CD4-positive, alpha-beta T cell (primary cell): ENCODE measurements at regions of chr19 and their contacts with region 1.

Region 1: DNA sequence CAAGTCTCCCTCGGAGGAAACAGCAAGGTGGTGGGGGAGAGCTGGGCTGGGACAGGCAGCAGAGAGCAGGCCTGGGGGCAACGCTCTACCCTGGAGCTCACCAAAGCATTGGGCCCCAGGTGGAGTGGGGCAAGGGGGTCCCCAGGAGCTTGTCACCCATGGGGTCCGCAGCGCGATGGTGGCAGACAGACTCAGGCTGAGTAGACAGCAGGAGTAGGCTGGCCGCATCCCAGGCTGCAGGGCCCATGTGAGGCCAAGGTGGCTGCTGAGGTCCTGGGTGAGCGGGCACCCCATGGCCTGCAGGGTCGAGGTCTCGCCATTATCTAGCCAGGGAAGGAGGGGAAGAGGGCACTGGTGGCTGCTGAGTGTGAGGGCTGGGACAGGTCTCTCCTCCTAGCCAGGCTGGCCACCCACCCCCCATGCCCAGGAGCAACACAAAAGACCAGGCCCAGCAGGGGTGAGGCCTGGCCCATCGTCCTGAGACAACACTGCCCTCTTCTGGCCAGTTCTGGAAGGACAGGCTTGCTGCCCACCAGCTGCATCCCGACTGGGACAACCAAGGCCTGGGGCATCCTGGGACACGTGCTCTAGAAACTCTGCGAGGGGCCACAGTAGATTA is 33.1 kb downstream of the CEBPG start:
- DNase-seq: peak; percentile 50 to 83 (median 72)
- ATAC-seq: peak; percentile 88
- H3K4me3 ChIP-seq: no peak overlapping the region
- H3K4me3 Mint-ChIP-seq: no peak overlapping the region
- H3K27ac ChIP-seq: no peak overlapping the region
- H3K27ac Mint-ChIP-seq: no peak overlapping the region
- H3K4me1 ChIP-seq: no peaks in the 10 kb centered on the region
- H3K4me1 Mint-ChIP-seq: no peaks in the 10 kb centered on the region
- H3K27me3 ChIP-seq: no peaks in the 10 kb centered on the region
- H3K27me3 Mint-ChIP-seq: no peaks in the 10 kb centered on the region
- CTCF ChIP-seq: peak; percentile 88

Region 2: DNA sequence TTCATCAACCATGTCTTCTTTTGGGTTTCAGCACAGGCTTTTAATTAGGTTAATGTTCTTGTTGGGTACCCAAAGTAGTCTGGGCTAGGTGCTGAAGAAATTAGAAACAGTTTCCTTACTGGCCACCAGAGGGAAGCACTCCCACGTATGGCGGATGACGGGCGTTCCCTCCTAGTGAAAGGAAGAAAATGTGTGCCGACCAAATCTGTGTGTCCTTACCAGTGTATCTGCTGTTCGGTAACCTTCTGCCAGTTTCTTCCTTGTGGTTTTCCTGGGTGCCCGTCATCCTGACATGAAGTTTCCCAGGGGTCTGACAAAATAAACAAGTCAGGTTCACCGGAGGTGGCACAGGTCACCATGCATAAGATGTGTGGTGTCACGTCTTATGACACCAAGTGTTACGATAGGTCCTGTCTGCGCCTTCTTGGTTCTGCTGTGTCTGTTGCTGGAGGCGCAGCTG is 280.7 kb before region 1 on chr19:
- CTCF ChIA-PET with region 1: interaction called, 6 read pairs
- POLR2A ChIA-PET with region 1: no interaction called
- intact Hi-C with region 1: loop called in 1 of 2 experiments (anchors 1 kb)
- DNase-seq: peak; percentile 33 to 82 (median 39)
- ATAC-seq: peak; percentile 98
- H3K4me3 ChIP-seq: no peak overlapping the region
- H3K4me3 Mint-ChIP-seq: no peak overlapping the region
- H3K27ac ChIP-seq: no peak overlapping the region
- H3K27ac Mint-ChIP-seq: no peak overlapping the region
- H3K4me1 ChIP-seq: peaks cover 4% of the 10 kb centered on the region
- H3K4me1 Mint-ChIP-seq: peaks cover 8% of the 10 kb centered on the region
- H3K27me3 ChIP-seq: no peaks in the 10 kb centered on the region
- H3K27me3 Mint-ChIP-seq: no peaks in the 10 kb centered on the region
- CTCF ChIP-seq: peak; percentile 85

Region 3: DNA sequence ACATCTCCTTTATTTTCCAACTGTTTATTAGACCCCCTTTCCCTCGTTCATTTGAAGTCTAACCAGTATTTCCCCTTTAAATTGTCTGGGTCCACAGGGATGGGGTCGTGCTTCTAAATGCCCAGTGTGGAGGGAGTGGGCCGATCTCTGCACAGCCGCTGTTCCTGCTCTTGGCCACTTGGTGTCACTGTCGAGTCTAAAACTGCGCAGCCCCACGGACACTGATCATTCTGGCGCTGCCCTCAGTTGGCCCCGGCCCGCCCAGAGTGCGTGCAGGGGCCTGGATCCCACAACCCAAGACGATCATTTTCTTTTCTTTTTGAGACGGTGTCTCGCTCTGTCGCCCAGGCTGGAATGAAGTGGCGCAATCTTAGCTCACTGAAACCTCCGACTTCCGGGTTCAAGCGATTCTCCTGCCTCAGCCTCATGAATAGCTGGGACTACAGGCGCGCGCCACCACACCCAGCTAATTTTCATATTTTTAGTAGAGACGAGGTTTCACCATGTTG is 262.7 kb before region 1 on chr19:
- CTCF ChIA-PET with region 1: no interaction called
- POLR2A ChIA-PET with region 1: no interaction called
- intact Hi-C with region 1: loop called in 1 of 2 experiments (anchors 5 kb)
- DNase-seq: peak; percentile 30 to 83 (median 51)
- ATAC-seq: peak; percentile 99
- H3K4me3 ChIP-seq: no peak overlapping the region
- H3K4me3 Mint-ChIP-seq: no peak overlapping the region
- H3K27ac ChIP-seq: no peak overlapping the region
- H3K27ac Mint-ChIP-seq: no peak overlapping the region
- H3K4me1 ChIP-seq: peaks cover 5% of the 10 kb centered on the region
- H3K4me1 Mint-ChIP-seq: peaks cover 5% of the 10 kb centered on the region
- H3K27me3 ChIP-seq: no peaks in the 10 kb centered on the region
- H3K27me3 Mint-ChIP-seq: peaks cover 4% of the 10 kb centered on the region
- CTCF ChIP-seq: peak; percentile 94

Region 4: GRCh38 chr19:33235269-33235995 is 171.2 kb before region 1 on chr19:
- CTCF ChIA-PET with region 1: interaction called, 23 read pairs
- POLR2A ChIA-PET with region 1: no interaction called
- intact Hi-C with region 1: loop called (anchors 1 kb)
- DNase-seq: peak; percentile 63 to 86 (median 76)
- ATAC-seq: peak; percentile 58
- H3K4me3 ChIP-seq: peak overlapping the region; percentile 51
- H3K4me3 Mint-ChIP-seq: peak overlapping the region; percentile 52
- H3K27ac ChIP-seq: no peak overlapping the region
- H3K27ac Mint-ChIP-seq: no peak overlapping the region
- H3K4me1 ChIP-seq: peaks cover 28% of the 10 kb centered on the region
- H3K4me1 Mint-ChIP-seq: peaks cover 6% of the 10 kb centered on the region
- H3K27me3 ChIP-seq: peaks cover 4 to 6% of the 10 kb centered on the region in 2 experiments
- H3K27me3 Mint-ChIP-seq: peaks cover 22% of the 10 kb centered on the region
- CTCF ChIP-seq: peak; percentile 93

Region 5: GRCh38 chr19:33241530-33242101 is 165.0 kb before region 1 on chr19:
- CTCF ChIA-PET with region 1: interaction called, 23 read pairs
- POLR2A ChIA-PET with region 1: no interaction called
- intact Hi-C with region 1: loop called in 1 of 2 experiments (anchors 1 kb)
- DNase-seq: peak in 5 of 14 experiments; percentile 15 to 68 (median 54)
- ATAC-seq: no peak
- H3K4me3 ChIP-seq: no peak overlapping the region
- H3K4me3 Mint-ChIP-seq: no peak overlapping the region
- H3K27ac ChIP-seq: no peak overlapping the region
- H3K27ac Mint-ChIP-seq: no peak overlapping the region
- H3K4me1 ChIP-seq: peaks cover 24% of the 10 kb centered on the region
- H3K4me1 Mint-ChIP-seq: no peaks in the 10 kb centered on the region
- H3K27me3 ChIP-seq: no peaks in the 10 kb centered on the region
- H3K27me3 Mint-ChIP-seq: peaks cover 4% of the 10 kb centered on the region
- CTCF ChIP-seq: peak; percentile 62